Uterus (tissue), 4 donors: ENCODE measurements at regions of chr19 and their contacts with region 1.

Region 1: DNA sequence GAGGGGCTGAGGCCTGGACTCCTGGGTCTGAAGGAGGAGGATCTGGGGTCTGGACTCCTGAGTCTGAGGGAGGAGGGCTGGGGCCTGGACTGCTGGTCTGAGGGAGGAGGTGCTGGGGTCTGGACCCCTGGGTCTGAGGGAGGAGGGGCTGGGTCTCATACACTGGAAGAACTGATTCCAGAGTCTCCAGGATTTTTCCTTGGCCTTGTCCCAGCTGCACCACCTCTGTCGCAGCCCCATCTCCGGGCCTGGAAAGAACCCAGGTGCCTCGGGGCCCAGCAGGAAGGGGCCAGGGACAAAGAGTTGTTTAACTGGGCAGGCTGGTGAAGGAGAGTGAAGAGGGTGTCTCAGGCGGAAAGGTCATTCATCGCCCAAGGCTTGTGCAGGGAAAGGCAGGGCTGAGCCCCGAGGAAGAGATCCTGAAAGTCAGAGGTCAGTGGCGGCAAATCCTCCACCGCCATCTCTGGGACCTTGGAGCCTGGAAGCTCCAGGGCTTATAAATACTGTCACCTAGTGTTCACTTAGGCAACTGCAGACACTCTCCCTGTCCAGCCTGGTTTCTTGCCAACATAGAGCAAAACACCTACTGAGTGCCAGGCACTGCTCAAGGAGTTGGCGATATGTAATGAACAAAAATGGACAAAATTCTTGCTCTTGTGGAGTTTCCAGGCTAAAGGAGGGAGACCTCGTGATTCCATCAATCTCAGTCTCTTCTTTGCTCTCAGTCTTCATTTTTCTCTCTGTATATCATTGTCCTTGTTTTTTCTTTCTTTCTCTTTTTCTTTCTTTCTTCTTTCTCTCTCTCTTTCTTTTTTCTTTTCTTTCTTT is 4.4 kb upstream of the KCNN4 start:
- DNase-seq: peak in 1 of 2 donors; percentile 32
- H3K4me3 ChIP-seq: no peak overlapping the region
- H3K27ac ChIP-seq: peak overlapping the region; percentile 9 to 33
- H3K4me1 ChIP-seq: no peaks in the 10 kb centered on the region
- H3K27me3 ChIP-seq: no peaks in the 10 kb centered on the region
- CTCF ChIP-seq: peak; percentile 79 to 94 (median 88)
- POLR2A ChIP-seq: no peak

Region 2: GRCh38 chr19:43662487-43662886 is 122.7 kb before region 1 on chr19:
- intact Hi-C with region 1: no loop called
- DNase-seq: no peak
- H3K4me3 ChIP-seq: no peak overlapping the region
- H3K27ac ChIP-seq: no peak overlapping the region
- H3K4me1 ChIP-seq: peaks cover 0 to 2% of the 10 kb centered on the region in 2 donors
- H3K27me3 ChIP-seq: no peaks in the 10 kb centered on the region
- CTCF ChIP-seq: no peak
- POLR2A ChIP-seq: no peak

Region 3: GRCh38 chr19:43747557-43748204 is 37.5 kb before region 1 on chr19:
- intact Hi-C with region 1: loop called (anchors 5 kb)
- DNase-seq: no peak
- H3K4me3 ChIP-seq: no peak overlapping the region
- H3K27ac ChIP-seq: no peak overlapping the region
- H3K4me1 ChIP-seq: no peaks in the 10 kb centered on the region
- H3K27me3 ChIP-seq: no peaks in the 10 kb centered on the region
- CTCF ChIP-seq: no peak
- POLR2A ChIP-seq: no peak

Region 4: DNA sequence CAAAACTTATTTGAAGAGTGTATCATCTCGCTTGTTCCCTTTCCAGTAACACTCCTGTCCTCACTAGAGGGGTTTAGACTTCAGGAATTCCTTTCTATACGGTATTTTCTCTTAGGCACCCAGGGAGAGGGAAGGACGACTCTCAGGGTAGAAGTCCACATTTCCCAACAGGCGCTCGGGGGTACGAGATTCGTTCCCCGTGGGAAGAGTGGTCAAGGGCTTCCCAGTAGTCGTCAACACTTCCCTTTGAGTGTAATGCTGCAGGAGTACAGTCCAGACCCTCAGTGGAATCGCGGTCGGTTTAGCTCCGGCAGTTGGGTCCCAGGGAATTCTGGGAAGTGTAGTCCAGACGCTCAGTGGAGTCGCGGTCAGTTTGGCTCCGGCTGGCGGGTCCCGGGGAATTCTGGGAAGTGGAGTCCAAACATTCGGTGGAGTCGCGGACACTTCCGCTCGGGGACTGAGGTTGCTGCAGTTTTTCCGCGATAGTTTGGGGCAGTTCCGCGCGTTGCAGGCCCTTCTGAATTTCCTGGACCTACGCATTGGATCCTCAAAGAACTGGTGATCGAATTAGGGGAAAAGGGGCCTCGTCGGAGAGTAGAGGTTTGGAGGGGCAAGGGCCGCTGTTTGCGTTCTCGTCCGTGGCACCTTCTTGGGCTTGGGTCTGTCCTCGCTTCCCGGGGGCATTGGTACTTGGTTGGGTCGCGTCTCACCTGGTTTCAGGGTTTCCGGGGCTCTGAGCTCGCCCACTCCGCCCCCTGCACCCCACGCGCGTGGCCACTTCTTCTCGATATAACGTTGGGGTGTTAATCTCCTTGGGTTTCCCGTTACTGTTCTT is 309.0 kb after region 1 on chr19 and contains the start of gene ZNF224:
- intact Hi-C with region 1: no loop called
- DNase-seq: peak; percentile 88 to 92
- H3K4me3 ChIP-seq: peak within 1 kb of the TSS; percentile 71 to 73
- H3K27ac ChIP-seq: peak within 1 kb of the TSS; percentile 60 to 69
- H3K4me1 ChIP-seq: no peaks in the 10 kb centered on the region
- H3K27me3 ChIP-seq: no peaks in the 10 kb centered on the region
- CTCF ChIP-seq: no peak
- POLR2A ChIP-seq: peak in 1 of 2 donors; percentile 20
- total RNA-seq, gene ZNF224: 7.4 to 59.7 (median 37.1) TPM